SK-N-SH (cell line): ENCODE measurements at regions of chr1 and their contacts with region 1.

Region 1: DNA sequence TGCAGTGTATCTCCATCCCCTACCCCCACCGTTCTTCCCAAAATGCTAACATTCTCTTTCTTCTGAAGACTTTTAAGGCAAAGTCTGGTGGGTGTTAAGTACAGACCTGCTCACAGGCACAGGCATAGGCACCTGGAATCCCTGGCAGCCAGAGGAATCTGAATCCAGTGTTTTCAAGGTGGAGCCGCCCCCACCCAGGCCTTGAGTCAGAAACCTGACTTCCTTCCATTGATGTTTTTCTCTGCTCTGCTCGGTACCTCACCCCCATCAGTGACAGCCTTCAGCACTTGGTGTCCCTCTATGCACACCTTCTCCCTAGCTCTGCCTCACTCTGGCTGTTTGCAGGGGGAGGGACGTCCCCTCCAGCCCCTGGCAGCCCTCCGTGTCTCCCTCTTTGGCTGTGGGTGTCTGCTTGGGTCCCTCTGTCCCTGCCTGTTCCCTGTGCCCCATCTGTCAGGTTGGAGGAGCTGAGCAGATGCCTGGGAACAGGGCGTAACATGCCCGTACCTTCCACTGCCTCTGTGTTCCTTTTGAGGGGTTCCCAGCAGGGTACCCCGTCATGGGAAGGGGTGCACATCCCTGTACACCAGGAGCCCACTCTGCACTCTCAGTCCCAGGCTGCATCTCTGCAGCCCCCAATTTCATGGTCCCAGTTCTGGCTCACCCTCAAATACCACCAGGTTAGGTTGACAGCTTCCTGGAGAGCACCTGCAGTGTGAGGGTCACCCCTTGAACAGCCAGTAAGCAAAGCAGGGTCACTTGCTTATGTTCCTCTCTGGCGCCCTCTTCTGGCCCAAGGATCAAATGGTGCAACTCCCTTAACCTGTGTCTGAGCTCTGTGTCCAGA is 6.7 kb downstream of the NCDN start:
- DNase-seq: peak; percentile 87
- H3K4me3 ChIP-seq: no peak overlapping the region; a peak in 1 of 4 replicates
- H3K27ac ChIP-seq: no peak overlapping the region
- H3K4me1 ChIP-seq: peaks cover 3 to 5% of the 10 kb centered on the region in 2 experiments; a peak in 1 of 4 replicates
- H3K27me3 ChIP-seq: no peaks in the 10 kb centered on the region
- CTCF ChIP-seq: peak; percentile 82
- EP300 ChIP-seq: no peak
- RAD21 ChIP-seq: peak; percentile 72

Region 2: DNA sequence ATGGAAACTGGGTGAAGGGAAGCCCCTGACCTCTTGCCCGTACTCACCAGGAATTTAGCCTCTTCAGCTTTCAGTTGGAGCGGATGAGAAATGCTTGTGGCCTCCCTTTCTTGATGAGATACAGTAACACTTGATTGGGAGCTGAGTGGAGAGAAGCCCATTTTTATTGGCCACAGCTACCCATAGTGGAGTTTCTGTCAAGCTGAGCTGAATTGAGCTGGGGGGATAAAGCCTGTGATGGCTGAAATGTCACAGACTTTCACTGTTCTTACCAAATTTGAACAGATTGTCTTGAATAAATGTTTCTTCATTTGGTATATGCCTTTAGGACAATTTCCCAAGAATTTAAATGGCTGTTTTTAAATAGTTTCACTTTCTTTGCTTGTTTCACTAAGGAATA is 169.9 kb before region 1 on chr1:
- CTCF ChIA-PET with region 1: no interaction called
- POLR2A ChIA-PET with region 1: no interaction called
- DNase-seq: no peak
- H3K4me3 ChIP-seq: no peak overlapping the region
- H3K27ac ChIP-seq: no peak overlapping the region
- H3K4me1 ChIP-seq: no peaks in the 10 kb centered on the region; a peak in 1 of 4 replicates
- H3K27me3 ChIP-seq: no peaks in the 10 kb centered on the region
- CTCF ChIP-seq: no peak
- EP300 ChIP-seq: no peak
- RAD21 ChIP-seq: no peak

Region 3: GRCh38 chr1:35443768-35444518 is 120.3 kb before region 1 on chr1:
- CTCF ChIA-PET with region 1: interaction called, 157 read pairs
- POLR2A ChIA-PET with region 1: no interaction called
- DNase-seq: no peak
- H3K4me3 ChIP-seq: no peak overlapping the region
- H3K27ac ChIP-seq: no peak overlapping the region
- H3K4me1 ChIP-seq: peaks cover 0 to 7% of the 10 kb centered on the region in 2 experiments; a peak in 1 of 4 replicates
- H3K27me3 ChIP-seq: no peaks in the 10 kb centered on the region
- CTCF ChIP-seq: peak; percentile 30; the same call in 1 of the 2 replicates
- EP300 ChIP-seq: no peak
- RAD21 ChIP-seq: peak; percentile 54

Region 4: DNA sequence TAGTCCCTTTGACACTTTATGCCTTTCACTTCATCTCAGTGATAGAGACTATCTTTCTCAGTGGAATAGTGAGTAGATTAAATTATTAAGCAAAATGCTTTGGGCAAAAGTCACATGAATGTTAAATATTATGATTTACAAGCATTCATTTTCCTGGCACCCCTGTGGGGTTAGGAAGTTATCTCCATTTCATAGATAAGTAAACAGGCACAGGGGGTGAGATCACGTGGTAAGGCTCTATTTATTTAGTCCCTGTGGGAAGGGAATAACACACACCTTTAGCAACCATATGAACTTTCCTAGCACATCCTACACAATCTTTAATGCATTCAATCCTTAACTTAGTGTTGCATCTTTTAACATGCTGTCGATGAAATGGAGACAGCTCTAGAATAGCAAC is 64.8 kb after region 1 on chr1:
- CTCF ChIA-PET with region 1: interaction called, 12 read pairs
- POLR2A ChIA-PET with region 1: no interaction called
- DNase-seq: no peak
- H3K4me3 ChIP-seq: no peak overlapping the region
- H3K27ac ChIP-seq: no peak overlapping the region; a peak in 1 of 4 replicates
- H3K4me1 ChIP-seq: peaks cover 0 to 2% of the 10 kb centered on the region in 2 experiments; a peak in 1 of 4 replicates
- H3K27me3 ChIP-seq: no peaks in the 10 kb centered on the region
- CTCF ChIP-seq: no peak
- EP300 ChIP-seq: peak in 1 of 2 experiments; percentile 24; a peak in 1 of 4 replicates
- RAD21 ChIP-seq: no peak

Region 5: GRCh38 chr1:35756064-35756463 is 191.8 kb after region 1 on chr1:
- CTCF ChIA-PET with region 1: interaction called, 11 read pairs
- POLR2A ChIA-PET with region 1: no interaction called
- DNase-seq: no peak
- H3K4me3 ChIP-seq: no peak overlapping the region
- H3K27ac ChIP-seq: no peak overlapping the region
- H3K4me1 ChIP-seq: no peaks in the 10 kb centered on the region
- H3K27me3 ChIP-seq: no peaks in the 10 kb centered on the region
- CTCF ChIP-seq: no peak
- EP300 ChIP-seq: no peak
- RAD21 ChIP-seq: no peak

Region 6: GRCh38 chr1:35769188-35769758 is 205.0 kb after region 1 on chr1:
- CTCF ChIA-PET with region 1: interaction called, 14 read pairs
- POLR2A ChIA-PET with region 1: no interaction called
- DNase-seq: peak; percentile 95
- H3K4me3 ChIP-seq: peak overlapping the region; percentile 83 to 89
- H3K27ac ChIP-seq: peak overlapping the region; percentile 73 to 89
- H3K4me1 ChIP-seq: peaks cover 4% of the 10 kb centered on the region in 2 experiments; a peak in 2 of 4 replicates
- H3K27me3 ChIP-seq: no peaks in the 10 kb centered on the region
- CTCF ChIP-seq: no peak; the same call in 1 of the 2 replicates
- EP300 ChIP-seq: no peak
- RAD21 ChIP-seq: no peak

Region 7: DNA sequence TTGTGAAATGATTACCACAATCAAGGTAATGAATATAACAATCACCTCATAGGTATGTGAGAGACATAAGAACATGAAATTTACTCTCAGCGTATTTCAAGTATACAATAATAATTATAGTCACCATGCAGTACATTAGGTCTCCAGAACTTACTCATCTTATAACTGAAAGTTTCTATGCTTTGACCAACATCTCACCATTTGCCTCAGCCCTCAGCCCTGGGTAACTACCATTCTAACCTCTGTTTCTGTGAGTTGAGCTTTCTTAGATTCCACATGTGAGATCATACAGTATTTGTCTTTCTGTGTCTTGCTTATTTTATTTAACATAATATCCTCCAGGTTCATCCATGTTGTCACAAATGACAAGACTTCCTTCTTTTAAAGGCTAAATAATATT is 424.0 kb after region 1 on chr1:
- CTCF ChIA-PET with region 1: no interaction called
- POLR2A ChIA-PET with region 1: no interaction called
- DNase-seq: no peak
- H3K4me3 ChIP-seq: no peak overlapping the region
- H3K27ac ChIP-seq: no peak overlapping the region
- H3K4me1 ChIP-seq: no peaks in the 10 kb centered on the region
- H3K27me3 ChIP-seq: no peaks in the 10 kb centered on the region
- CTCF ChIP-seq: no peak
- EP300 ChIP-seq: no peak
- RAD21 ChIP-seq: no peak